Astrocyte of the cerebellum (primary cell): ENCODE measurements at regions of chr2 and their contacts with region 1.

Region 1: GRCh38 chr2:165203689-165204559 is at the start of gene SCN3A:
- DNase-seq: peak; percentile 39
- H3K4me3 ChIP-seq: peak within 1 kb of the TSS; percentile 16
- CTCF ChIP-seq: peak; percentile 78

Region 2: DNA sequence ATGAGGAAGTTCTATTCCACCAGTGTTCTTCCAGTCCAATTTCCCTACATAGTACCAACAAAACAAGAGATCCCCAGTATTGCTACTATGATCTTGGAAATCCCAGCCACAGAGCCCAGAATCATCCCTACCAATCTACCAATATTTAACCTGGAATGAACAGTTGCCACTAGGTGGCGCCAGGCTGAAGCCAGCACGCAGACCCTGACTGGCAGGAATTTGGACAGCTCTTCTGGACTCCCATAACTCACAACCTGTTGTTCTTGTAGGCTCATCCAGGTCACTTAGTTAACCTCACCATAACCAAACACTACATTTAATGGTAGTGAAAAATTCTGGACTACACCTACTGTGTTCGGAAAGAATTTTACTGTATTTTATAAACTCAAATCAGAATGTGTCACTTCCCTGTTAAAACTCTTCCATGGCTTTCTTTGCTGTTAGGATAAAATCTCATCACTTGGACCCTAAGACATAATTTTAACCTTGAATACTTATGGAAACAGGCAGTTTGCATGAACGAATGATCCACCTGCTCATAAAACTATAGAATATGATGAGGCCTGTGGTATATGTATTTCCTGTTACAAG is 188.8 kb before region 1 on chr2:
- in situ Hi-C with region 1: loop called (anchors 25 kb)
- DNase-seq: peak; percentile 41
- H3K4me3 ChIP-seq: no peak overlapping the region
- CTCF ChIP-seq: peak; percentile 95

Region 3: DNA sequence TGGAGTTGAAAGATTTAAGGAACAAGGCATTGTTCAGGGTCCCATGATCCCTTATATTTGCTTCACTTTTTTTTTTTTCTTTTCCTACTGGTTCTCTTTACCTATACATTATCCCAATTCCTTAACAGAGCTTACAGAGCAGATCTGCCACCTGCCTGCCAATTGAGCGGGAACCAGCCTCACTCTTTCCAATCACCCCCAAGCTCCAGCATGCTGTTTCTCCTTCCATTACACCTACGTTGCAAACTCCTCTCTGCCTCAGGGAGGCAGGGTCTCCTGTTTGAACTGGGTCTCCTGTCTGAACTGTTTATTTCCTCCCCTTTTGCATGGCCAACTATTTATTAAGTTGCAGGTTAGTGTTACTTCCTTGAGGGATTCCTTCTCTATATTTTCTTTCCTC is 171.4 kb before region 1 on chr2:
- in situ Hi-C with region 1: no loop called
- DNase-seq: no peak
- H3K4me3 ChIP-seq: no peak overlapping the region
- CTCF ChIP-seq: no peak

Region 4: DNA sequence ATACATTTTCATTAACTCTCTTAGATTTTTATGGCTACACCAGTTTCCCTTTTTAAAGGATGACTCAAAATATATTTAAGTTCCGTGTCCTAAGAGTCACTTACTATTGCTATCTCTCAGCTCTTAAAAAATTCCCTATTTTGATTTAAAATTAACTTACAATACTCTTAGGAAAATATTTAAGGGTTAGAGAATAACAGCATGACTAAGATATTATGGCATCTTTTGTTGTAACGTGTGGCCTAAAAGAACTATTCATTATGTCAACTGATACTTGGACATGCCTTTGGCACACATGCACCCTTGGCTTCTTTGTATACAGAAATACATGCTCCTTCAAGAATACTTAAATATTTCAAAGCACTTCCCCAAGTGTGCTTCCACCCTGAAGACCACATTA is 42.4 kb before region 1 on chr2:
- in situ Hi-C with region 1: no loop called
- DNase-seq: peak; percentile 67
- H3K4me3 ChIP-seq: no peak overlapping the region
- CTCF ChIP-seq: no peak

Region 5: GRCh38 chr2:165601928-165602521 is 398.1 kb after region 1 on chr2:
- in situ Hi-C with region 1: no loop called
- DNase-seq: peak; percentile 19
- H3K4me3 ChIP-seq: no peak overlapping the region
- CTCF ChIP-seq: no peak